ENCODE measurements at regions of chr3 and their contacts with region 1.

Region 1: GRCh38 chr3:153595186-153595815 is 433.3 kb downstream of the RAP2B start:
- DNase-seq: no peak
- H3K4me3 ChIP-seq: no peak overlapping the region
- H3K27ac ChIP-seq: no peak overlapping the region
- H3K4me1 ChIP-seq: peaks cover 0 to 2% (median 0%) of the 10 kb centered on the region in 6 donors
- H3K27me3 ChIP-seq: no peaks in the 10 kb centered on the region
- CTCF ChIP-seq: peak in 7 of 11 experiments; percentile 20 to 46 (median 32)
- POLR2A ChIP-seq: no peak

Region 2: DNA sequence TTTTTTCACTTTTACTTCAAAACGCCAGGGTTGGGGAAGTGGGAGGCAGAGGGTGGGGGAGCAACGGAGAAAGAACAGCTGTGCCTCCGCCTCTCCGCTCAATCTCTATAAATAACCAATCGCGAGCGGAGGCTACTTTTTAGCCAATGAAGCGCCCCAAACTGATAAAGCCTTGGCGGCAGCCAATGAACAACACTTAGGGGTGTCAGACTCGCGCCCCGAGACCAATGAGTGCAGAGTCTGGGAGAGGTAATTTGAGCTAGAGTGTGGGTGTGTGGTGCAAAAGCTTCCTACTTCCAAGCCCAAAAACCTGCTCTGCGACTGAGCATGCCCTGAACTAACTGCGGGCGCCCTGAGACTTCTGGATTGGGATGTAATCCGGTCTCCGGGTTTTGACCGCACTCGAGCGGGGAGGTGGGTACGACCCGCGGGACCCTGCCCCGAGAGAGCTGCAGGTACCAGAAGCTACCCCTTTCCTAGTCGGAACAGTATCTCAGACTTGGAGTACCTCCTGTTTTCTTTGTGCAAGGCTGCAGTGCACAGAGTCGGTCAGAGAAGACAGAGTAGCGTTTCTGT is 434.1 kb before region 1 on chr3:
- intact Hi-C with region 1: loop called (anchors 10 kb)
- DNase-seq: peak; percentile 93
- H3K4me3 ChIP-seq: peak overlapping the region; percentile 76 to 99 (median 88)
- H3K27ac ChIP-seq: peak overlapping the region; percentile 88 to 96 (median 94)
- H3K4me1 ChIP-seq: peaks cover 16 to 46% (median 37%) of the 10 kb centered on the region in 6 donors
- H3K27me3 ChIP-seq: no peaks in the 10 kb centered on the region
- CTCF ChIP-seq: peak in 1 of 11 experiments; percentile 11
- POLR2A ChIP-seq: peak in 1 of 3 donors; percentile 26

Region 3: GRCh38 chr3:153658136-153658535 is 62.8 kb after region 1 on chr3:
- intact Hi-C with region 1: no loop called
- DNase-seq: no peak
- H3K4me3 ChIP-seq: no peak overlapping the region
- H3K27ac ChIP-seq: no peak overlapping the region
- H3K4me1 ChIP-seq: no peaks in the 10 kb centered on the region
- H3K27me3 ChIP-seq: no peaks in the 10 kb centered on the region
- CTCF ChIP-seq: no peak
- POLR2A ChIP-seq: no peak